Activated T-helper 1 cell treated with anti-CD3 and anti-CD28 coated beads, Interleukin-12 subunit alpha, Interleukin-12 subunit beta, Interleukin-2, Interleukin-4 antibody, amounts not matched to agents 30 ng/mL and 10 ng/mL and 1 ng/mL, durations not matched to agents 14 hours and 24 hours and 36 hours (primary cell): ENCODE measurements at regions of chr18 and their contacts with region 1.

Region 1: GRCh38 chr18:70663141-70663540 is 374.3 kb downstream of the SOCS6 start:
- DNase-seq: no peak
- H3K4me3 Mint-ChIP-seq: no peak overlapping the region
- H3K27ac Mint-ChIP-seq: no peak overlapping the region
- H3K4me1 Mint-ChIP-seq: no peaks in the 10 kb centered on the region
- H3K27me3 Mint-ChIP-seq: no peaks in the 10 kb centered on the region

Region 2: GRCh38 chr18:70582981-70583380 is 80.2 kb before region 1 on chr18:
- intact Hi-C with region 1: loop called (anchors 10 kb)
- DNase-seq: no peak
- H3K4me3 Mint-ChIP-seq: no peak overlapping the region
- H3K27ac Mint-ChIP-seq: no peak overlapping the region
- H3K4me1 Mint-ChIP-seq: no peaks in the 10 kb centered on the region
- H3K27me3 Mint-ChIP-seq: no peaks in the 10 kb centered on the region